ENCODE measurements at regions of chr20 and their contacts with region 1.

Region 1: DNA sequence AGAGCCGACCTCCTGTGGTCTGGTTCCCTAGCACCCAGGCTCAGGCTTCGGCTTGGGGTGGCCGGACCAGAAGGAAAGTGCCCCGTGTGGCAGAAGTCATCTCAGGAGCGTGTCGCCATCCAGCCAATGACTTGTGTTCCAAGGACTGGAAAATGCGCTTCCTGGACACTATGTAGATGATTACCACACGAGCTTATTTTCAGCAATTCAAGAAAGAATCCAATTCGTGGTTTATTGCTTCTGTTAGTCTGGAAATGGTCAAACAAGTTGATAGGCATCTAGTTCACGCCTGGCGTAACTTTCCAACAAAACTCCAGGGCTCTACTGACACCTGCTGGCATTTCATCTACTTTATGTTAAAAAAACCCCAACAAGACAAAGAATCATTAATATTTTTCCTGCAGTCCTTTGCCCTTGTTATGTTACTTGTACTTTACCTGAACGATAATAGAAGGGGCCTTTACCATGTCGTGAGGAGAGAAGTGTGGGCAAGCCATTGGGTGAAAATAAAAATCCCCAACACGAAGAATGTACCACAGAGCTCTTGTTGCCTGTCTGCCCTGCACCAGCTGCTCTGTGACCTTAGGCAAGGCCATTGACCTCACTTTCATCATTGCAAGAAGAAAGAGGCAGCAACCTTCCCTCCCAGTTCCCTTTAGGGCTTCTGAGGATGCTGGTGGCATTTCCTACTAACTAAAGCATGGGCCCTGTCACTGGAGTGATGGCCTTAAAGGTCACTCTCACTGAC is 154.7 kb upstream of the LAMP5 start:
- DNase-seq: peak; percentile 43 to 52
- ATAC-seq: peak; percentile 87

Region 2: GRCh38 chr20:8790442-8791074 is 569.2 kb before region 1 on chr20:
- intact Hi-C with region 1: loop called in 1 of 2 experiments (anchors 10 kb)
- DNase-seq: peak in 1 of 2 donors; percentile 35
- ATAC-seq: no peak